ENCODE measurements at regions of chr9 and their contacts with region 1.

Region 1: DNA sequence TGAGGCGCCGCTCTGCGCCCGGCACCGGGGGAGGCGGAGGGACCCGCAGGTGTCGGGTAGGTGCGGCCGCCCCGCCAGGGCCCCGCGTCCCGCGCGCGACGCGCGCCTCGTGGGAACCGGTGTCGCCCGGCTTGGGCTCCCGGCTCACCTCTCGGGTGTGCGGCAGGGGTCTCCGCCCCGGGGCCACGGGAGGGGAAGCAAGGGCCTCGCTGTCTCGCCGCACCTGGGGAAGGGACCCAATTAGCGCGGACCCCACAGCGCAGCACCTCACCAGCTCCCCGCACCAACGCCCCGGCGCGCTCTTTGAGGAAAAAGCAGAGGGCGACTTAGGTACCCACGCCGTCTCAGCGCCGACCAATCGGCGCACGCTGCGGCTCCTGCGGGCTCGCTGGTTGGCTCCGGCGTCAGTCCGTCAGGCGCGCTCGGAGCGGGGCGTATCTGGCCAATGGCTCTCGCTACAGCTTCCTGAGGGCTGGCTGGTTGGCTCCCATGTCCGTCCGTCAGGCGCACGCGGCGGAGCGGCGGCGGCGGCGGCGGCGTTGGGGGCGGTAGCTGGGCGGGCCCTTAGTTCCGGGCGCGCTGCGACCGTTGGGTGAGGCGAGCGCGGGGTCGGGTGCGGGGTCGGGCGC is at the start of gene TRAF2:
- DNase-seq: peak; percentile 97
- ATAC-seq: peak; percentile 97
- H3K4me3 ChIP-seq: peak within 1 kb of the TSS; percentile 95
- H3K27ac ChIP-seq: peak within 1 kb of the TSS; percentile 32
- H3K4me1 ChIP-seq: peaks cover 10% of the 10 kb centered on the region; the same call in 1 of the 2 replicates
- H3K27me3 ChIP-seq: no peaks in the 10 kb centered on the region
- CTCF ChIP-seq: no peak
- total RNA-seq, gene TRAF2: 11.5 and 25.4 TPM in 2 replicates

Region 2: DNA sequence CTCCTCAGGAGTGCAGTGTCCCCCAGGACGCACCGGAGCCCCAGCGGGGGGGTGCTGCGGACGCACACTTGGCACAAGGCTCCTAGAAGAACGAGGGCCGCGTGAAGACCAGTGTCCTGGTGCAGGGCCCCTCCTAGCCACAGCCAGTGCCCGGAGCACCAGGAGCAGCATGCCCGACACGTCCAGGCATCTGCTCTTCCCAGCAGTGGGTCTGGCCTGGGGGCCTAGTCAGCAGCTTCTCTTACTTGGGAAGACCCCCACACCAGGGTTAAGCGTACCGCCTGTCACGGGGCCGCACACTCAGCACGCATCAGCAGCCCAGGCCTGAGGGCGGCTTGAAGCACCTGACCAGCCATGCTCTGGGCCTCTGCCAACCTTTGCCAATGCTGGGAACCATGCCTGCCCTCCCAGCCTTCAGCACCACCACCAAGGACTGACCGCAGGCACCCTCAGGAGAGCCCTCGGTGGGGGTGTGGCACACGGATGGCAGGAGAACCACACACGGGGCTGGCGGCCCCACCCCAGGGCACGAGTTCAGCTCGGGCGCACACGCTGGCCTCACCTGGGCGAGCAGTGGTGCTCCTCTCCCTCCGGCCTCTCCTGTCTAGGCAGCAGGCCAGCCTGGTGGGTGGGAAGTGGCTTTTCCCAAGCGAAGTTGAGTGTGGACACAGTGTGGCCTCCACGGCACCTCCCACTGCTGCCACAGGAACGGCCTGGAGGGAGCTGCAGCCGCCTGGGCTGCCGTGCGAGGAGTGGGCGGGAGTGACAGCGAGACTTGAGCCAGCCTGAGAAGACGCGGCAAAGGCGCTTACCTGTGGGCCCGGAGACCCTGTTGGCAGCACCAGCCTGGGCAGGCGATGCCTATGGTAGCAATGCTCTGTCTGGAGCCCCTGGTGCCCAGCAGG is 55.8 kb before region 1 on chr9:
- CTCF ChIA-PET with region 1: no interaction called
- POLR2A ChIA-PET with region 1: no interaction called
- intact Hi-C with region 1: no loop called
- DNase-seq: no peak
- ATAC-seq: no peak
- H3K4me3 ChIP-seq: no peak overlapping the region
- H3K27ac ChIP-seq: no peak overlapping the region
- H3K4me1 ChIP-seq: no peaks in the 10 kb centered on the region
- H3K27me3 ChIP-seq: no peaks in the 10 kb centered on the region
- CTCF ChIP-seq: no peak

Region 3: DNA sequence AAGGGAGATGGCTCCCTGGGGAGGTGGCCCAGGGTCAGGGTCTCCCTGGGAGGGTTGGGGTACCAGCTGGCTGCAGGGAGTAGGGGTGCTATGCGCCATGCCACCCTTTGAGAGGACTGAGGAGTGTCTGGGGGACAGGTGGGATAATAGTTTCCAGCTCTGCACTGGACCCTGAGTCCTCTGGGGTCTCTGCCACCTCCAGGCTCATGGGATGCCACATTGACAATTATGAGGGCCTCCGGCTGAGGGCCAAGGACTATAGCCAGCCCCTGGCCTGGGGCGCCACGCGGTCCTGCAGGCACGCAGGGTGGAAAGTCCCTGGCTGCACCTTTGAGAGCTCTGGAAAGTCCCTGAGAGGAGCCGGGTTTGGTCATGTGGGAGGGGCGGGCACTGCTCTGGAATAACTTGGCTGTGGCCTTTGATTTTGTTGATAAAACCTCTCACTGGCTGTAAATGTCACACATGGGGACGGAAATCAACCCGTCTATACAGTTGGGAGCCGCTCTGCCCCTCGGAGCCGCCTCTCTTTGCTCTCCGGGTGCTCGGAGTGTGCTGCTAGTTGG is 16.3 kb after region 1 on chr9:
- CTCF ChIA-PET with region 1: no interaction called
- POLR2A ChIA-PET with region 1: interaction called, 4 read pairs
- intact Hi-C with region 1: loop called (anchors 2 kb)
- DNase-seq: peak; percentile 67
- ATAC-seq: peak; percentile 65
- H3K4me3 ChIP-seq: peak overlapping the region; percentile 7; the same call in 1 of the 2 replicates
- H3K27ac ChIP-seq: peak overlapping the region; percentile 99
- H3K4me1 ChIP-seq: peaks cover 31% of the 10 kb centered on the region
- H3K27me3 ChIP-seq: no peaks in the 10 kb centered on the region
- CTCF ChIP-seq: no peak

Region 4: GRCh38 chr9:136944519-136945279 is 58.6 kb after region 1 on chr9 and contains the starts of genes C8G and FBXW5:
- CTCF ChIA-PET with region 1: no interaction called
- POLR2A ChIA-PET with region 1: no interaction called
- intact Hi-C with region 1: loop called (anchors 2 kb)
- DNase-seq: peak; percentile 91
- ATAC-seq: peak; percentile 69
- H3K4me3 ChIP-seq: peak within 1 kb of the TSS; percentile 71
- H3K27ac ChIP-seq: no peak within 1 kb of the TSS
- H3K4me1 ChIP-seq: peaks cover 10% of the 10 kb centered on the region; the same call in 1 of the 2 replicates
- H3K27me3 ChIP-seq: no peaks in the 10 kb centered on the region
- CTCF ChIP-seq: peak; percentile 77
- total RNA-seq, gene C8G: 0.77 TPM in 1 of 2 replicates, not detected in the other
- total RNA-seq, gene FBXW5: 138 and 159 TPM in 2 replicates

Measured in PC-3 (cell line).